PC-3 (cell line): ENCODE measurements at regions of chr11 and their contacts with region 1.

Region 1: DNA sequence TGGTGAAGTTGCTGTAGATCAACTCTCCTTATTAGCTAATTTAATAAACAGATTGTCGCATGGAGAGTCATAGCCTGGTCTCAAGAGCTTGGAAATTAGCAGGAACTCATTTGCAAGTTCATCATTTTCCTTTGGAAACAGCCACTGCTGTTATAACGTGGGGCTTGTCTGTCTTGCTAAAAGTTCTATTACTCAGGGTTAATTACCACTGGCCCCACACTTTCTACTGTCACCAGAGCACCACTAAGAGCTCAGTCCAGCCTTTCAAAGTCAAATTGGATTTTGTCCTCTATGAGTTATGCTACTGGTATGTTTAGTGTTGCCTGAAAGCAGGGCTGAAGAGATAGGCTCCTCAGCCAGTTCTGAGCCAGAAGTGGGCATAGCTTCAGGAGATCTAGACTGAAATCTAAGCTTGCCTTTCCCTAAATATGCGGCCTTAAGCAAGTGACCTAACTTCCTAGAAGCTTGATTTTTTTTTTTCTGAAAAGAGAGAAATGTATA is 292.2 kb downstream of the INSC start:
- DNase-seq: no peak
- ATAC-seq: no peak
- H3K4me3 ChIP-seq: no peak overlapping the region
- H3K27ac ChIP-seq: no peak overlapping the region
- H3K4me1 ChIP-seq: no peaks in the 10 kb centered on the region
- H3K27me3 ChIP-seq: no peaks in the 10 kb centered on the region
- CTCF ChIP-seq: no peak

Region 2: DNA sequence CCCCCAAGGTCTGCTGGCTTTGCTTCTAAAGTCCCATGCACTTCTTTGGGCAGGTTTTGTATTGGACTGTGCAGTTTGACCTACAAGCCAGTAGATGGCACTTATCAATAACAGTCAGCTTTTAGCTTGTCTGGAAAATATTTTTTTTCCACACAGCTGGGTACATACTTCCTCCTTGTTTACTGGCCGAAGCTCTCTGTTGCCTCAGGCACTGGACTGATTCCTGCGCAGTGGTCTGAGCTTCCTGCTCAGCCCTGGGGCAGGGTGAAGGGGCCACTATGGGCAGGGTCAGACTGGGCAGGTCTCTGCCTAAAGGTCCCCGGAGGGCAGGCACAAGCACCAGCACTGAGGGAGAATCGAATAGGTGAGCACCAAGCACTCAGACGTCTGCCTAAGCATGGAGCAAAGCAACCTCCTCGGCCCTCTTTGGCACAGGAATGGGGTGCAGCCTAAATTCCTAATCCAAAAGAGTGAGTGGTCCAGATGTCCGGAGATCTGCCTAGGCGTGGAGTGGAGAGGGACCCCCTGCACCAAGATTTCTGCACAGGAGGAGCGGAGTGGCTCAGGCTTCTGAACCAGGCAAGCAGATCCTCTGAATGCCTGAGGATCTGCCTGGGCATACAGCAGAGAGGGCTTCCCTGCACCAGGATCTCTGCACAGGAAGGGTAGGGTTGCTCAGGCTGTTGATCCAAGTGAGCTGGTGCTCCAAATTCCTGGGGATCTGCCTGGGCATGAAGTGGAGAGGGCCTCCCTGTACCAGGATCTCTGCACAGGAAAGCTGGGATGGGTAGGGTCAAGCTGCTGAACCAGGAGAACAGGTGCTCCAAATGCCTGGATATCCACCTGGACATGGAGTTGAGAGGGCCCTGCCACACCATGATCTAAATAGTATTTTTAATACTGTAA is 1225.6 kb after region 1 on chr11:
- CTCF ChIA-PET with region 1: no interaction called
- POLR2A ChIA-PET with region 1: no interaction called
- intact Hi-C with region 1: loop called (anchors 5 kb)
- DNase-seq: peak; percentile 66
- ATAC-seq: peak; percentile 79
- H3K4me3 ChIP-seq: peak overlapping the region; percentile 52; the same call in 1 of the 2 replicates
- H3K27ac ChIP-seq: no peak overlapping the region
- H3K4me1 ChIP-seq: no peaks in the 10 kb centered on the region
- H3K27me3 ChIP-seq: no peaks in the 10 kb centered on the region
- CTCF ChIP-seq: peak; percentile 69